ENCODE measurements at regions of chr15 and their contacts with region 1.

Region 1: GRCh38 chr15:72599855-72600464 is 54.5 kb upstream of the GOLGA6B start:
- DNase-seq: peak; percentile 6 to 41 (median 29)
- H3K4me3 ChIP-seq: no peak overlapping the region
- H3K4me3 Mint-ChIP-seq: no peak overlapping the region
- H3K27ac ChIP-seq: no peak overlapping the region
- H3K27ac Mint-ChIP-seq: no peak overlapping the region
- H3K4me1 ChIP-seq: no peaks in the 10 kb centered on the region
- H3K4me1 Mint-ChIP-seq: no peaks in the 10 kb centered on the region
- H3K27me3 ChIP-seq: no peaks in the 10 kb centered on the region
- H3K27me3 Mint-ChIP-seq: peaks cover 0 to 1% (median 0%) of the 10 kb centered on the region in 3 donors
- CTCF ChIP-seq: peak; percentile 73

Region 2: GRCh38 chr15:72312605-72313447 is 287.1 kb before region 1 on chr15:
- intact Hi-C with region 1: no loop called
- DNase-seq: peak; percentile 58 to 72 (median 71)
- H3K4me3 ChIP-seq: no peak overlapping the region
- H3K4me3 Mint-ChIP-seq: no peak overlapping the region
- H3K27ac ChIP-seq: no peak overlapping the region
- H3K27ac Mint-ChIP-seq: peak overlapping the region in 1 of 7 donors; percentile 37
- H3K4me1 ChIP-seq: no peaks in the 10 kb centered on the region
- H3K4me1 Mint-ChIP-seq: no peaks in the 10 kb centered on the region
- H3K27me3 ChIP-seq: no peaks in the 10 kb centered on the region
- H3K27me3 Mint-ChIP-seq: peaks cover 1 to 4% (median 3%) of the 10 kb centered on the region in 3 donors
- CTCF ChIP-seq: peak; percentile 86

Region 3: GRCh38 chr15:72616491-72617210 is 16.7 kb after region 1 on chr15:
- intact Hi-C with region 1: no loop called
- DNase-seq: no peak
- H3K4me3 ChIP-seq: no peak overlapping the region
- H3K4me3 Mint-ChIP-seq: no peak overlapping the region
- H3K27ac ChIP-seq: no peak overlapping the region
- H3K27ac Mint-ChIP-seq: peak overlapping the region in 1 of 7 donors; percentile 58
- H3K4me1 ChIP-seq: no peaks in the 10 kb centered on the region
- H3K4me1 Mint-ChIP-seq: no peaks in the 10 kb centered on the region
- H3K27me3 ChIP-seq: no peaks in the 10 kb centered on the region
- H3K27me3 Mint-ChIP-seq: peaks cover 0 to 5% (median 0%) of the 10 kb centered on the region in 3 donors
- CTCF ChIP-seq: no peak

Region 4: GRCh38 chr15:72671535-72671934 is 71.6 kb after region 1 on chr15:
- intact Hi-C with region 1: loop called in 1 of 2 experiments (anchors 10 kb)
- DNase-seq: no peak
- H3K4me3 ChIP-seq: no peak overlapping the region
- H3K4me3 Mint-ChIP-seq: peak overlapping the region in 1 of 2 donors; percentile 15
- H3K27ac ChIP-seq: no peak overlapping the region
- H3K27ac Mint-ChIP-seq: no peak overlapping the region
- H3K4me1 ChIP-seq: no peaks in the 10 kb centered on the region
- H3K4me1 Mint-ChIP-seq: peaks cover 7% of the 10 kb centered on the region
- H3K27me3 ChIP-seq: peaks cover 2% of the 10 kb centered on the region in 2 donors
- H3K27me3 Mint-ChIP-seq: peaks cover 10 to 15% (median 11%) of the 10 kb centered on the region in 3 donors
- CTCF ChIP-seq: no peak